A549 (cell line): ENCODE measurements at regions of chr7 and their contacts with region 1.

Region 1: DNA sequence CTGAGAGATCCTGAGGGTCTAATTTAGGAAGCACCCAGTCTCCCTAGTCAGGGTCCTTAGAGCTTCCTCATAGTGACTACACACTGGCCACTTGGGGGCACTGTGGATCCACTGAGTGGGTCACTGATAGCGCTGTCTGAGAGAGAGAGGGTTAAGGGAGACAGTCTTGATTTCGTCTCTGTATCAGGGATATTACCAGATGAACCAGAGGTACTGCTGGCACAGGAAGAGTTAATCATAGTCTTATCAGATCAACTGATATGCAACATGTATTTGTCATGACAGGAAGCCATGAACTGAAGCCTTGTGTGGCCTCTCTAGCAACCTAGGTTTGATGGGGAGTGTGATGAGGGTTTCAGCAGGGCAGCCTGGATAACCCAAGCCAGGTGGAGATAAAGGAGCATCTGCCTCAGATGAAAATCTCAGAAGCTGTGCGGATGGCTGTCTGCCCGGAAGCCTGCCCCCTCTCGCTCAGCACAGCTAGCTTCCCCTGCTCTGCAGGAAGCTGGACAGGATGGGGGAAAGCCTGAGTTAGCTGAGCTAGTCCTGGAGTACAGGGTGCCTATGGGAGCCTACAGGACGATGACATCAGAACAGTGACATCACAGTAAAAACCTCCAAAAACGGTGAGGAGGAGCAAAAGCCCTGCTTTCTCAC is 214.0 kb upstream of the PRSS1 start:
- DNase-seq: peak; percentile 68 to 76
- ATAC-seq: peak; percentile 97 to 100
- H3K4me3 ChIP-seq: no peak overlapping the region
- H3K27ac ChIP-seq: peak overlapping the region in 1 of 2 experiments; percentile 50; a peak in 2 of 6 replicates
- H3K4me1 ChIP-seq: peaks cover 14% of the 10 kb centered on the region; the same call in 2 of the 3 replicates
- CTCF ChIP-seq: peak; percentile 94
- EP300 ChIP-seq: no peak
- POLR2A ChIP-seq: no peak
- RAD21 ChIP-seq: peak; percentile 93 to 99

Region 2: DNA sequence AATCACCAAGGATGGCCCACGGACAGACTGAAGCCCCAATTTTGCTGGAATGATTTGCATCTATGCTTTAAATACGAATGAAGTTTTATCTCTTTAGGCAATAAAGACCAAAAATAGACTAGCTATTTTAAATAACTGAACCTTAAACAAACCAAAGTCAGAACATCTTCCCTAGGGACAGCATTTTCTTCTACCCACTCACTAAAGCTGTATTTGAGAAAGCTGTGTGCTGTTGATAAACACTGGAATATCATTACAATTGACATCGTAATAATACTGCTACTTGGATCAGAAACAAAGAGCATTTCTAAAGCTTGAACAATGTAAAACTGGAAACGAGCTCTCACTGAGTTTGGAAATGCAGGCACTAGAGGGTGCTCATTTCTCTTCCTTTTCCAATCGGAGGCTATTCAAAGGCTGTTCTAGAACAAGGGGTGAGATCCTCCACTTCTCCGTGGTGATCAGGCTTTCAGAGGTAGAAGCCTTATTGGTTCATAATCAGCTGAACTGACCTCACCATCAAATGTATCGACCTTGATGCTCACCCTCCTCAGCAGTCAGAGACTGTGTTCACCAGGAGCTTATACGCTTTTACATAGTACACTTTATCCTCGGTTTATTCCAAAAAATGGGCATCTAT is 11.3 kb before region 1 on chr7:
- CTCF ChIA-PET with region 1: interaction called, 53 read pairs
- POLR2A ChIA-PET with region 1: no interaction called
- DNase-seq: no peak
- ATAC-seq: peak in 1 of 2 experiments; percentile 47; a peak in 2 of 6 replicates
- H3K4me3 ChIP-seq: no peak overlapping the region
- H3K27ac ChIP-seq: no peak overlapping the region
- H3K4me1 ChIP-seq: no peaks in the 10 kb centered on the region
- CTCF ChIP-seq: no peak; the same call in 2 of the 3 replicates
- EP300 ChIP-seq: no peak
- POLR2A ChIP-seq: no peak
- RAD21 ChIP-seq: no peak

Region 3: DNA sequence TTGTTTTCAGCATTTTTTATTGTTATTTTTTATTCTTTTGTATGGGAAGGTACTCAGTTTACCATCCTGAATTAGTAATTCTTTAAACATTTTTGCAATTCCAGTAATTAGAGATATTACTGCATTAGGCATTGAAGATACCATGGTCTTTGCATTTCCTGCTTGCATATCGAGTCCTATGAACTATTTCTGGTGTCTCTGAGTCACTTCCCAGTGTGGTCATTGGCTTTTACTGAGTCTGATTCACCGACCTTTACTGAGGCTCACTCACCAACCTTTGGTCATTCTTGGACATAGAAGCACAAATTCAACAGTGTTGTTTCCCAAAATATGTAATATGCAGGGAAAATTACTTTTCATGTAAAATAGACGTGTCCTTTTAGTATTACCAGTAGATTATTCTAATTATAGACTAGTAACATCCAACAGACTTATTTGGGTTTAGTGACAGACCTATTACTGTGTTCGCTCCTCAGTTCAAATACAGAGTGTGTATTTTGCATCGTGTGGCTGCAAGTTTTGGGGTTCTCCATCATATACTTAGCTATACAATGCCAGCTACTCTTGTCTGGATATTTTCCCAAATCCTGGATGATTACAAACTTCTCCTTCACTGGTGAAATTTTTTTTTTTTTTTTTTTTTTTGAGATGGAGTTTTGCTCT is 33.3 kb after region 1 on chr7:
- CTCF ChIA-PET with region 1: interaction called, 19 read pairs
- POLR2A ChIA-PET with region 1: no interaction called
- DNase-seq: peak; percentile 38 to 72
- ATAC-seq: peak; percentile 94 to 97
- H3K4me3 ChIP-seq: no peak overlapping the region
- H3K27ac ChIP-seq: peak overlapping the region; percentile 2 to 54; a peak in 3 of 6 replicates
- H3K4me1 ChIP-seq: peaks cover 16% of the 10 kb centered on the region
- CTCF ChIP-seq: no peak
- EP300 ChIP-seq: no peak
- POLR2A ChIP-seq: no peak
- RAD21 ChIP-seq: no peak

Region 4: GRCh38 chr7:142603870-142604448 is 68.7 kb after region 1 on chr7:
- CTCF ChIA-PET with region 1: interaction called, 56 read pairs
- POLR2A ChIA-PET with region 1: no interaction called
- DNase-seq: peak; percentile 57 to 66
- ATAC-seq: peak; percentile 43 to 65; a peak in 5 of 6 replicates
- H3K4me3 ChIP-seq: no peak overlapping the region; the same call in 2 of the 3 replicates
- H3K27ac ChIP-seq: no peak overlapping the region
- H3K4me1 ChIP-seq: no peaks in the 10 kb centered on the region
- CTCF ChIP-seq: peak; percentile 86
- EP300 ChIP-seq: no peak
- POLR2A ChIP-seq: no peak
- RAD21 ChIP-seq: peak; percentile 79 to 80

Region 5: DNA sequence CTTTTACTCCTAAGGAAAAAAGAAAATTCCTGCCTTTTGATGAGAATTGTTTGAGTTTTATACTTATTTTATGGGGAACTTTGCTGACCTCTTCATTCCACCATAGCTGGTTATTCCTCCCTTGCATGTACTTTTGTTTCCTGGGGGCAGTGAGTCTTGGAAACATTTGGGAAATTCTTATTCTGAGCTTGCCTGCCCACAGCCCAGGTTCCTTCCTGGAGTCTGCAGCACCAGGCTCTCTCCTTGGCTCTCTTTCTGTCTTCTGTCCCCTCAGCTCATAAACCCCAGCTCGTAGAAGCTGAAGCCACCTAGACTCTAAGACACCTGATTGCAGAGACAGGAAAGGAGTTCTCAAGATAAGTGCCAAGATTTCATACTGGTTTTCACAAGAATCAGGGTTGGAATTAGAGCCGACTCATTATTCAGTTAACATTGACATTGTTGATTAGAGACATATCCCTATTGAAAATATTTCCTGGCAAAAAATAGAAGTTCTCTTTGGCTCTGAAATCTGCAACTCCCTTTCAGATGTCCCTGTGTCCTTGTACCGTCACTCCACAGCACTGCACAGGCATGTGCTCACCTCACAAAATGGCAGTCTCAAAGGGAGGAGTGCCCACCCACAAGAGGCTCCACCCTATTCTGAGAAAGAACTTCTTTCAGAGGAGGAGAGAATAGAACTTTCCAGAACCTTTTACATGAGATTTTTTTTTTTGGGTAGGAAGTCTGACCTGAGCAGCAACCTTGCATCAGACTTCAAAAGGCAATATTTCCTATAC is 146.3 kb after region 1 on chr7:
- CTCF ChIA-PET with region 1: no interaction called
- POLR2A ChIA-PET with region 1: no interaction called
- DNase-seq: no peak
- ATAC-seq: no peak
- H3K4me3 ChIP-seq: no peak overlapping the region
- H3K27ac ChIP-seq: no peak overlapping the region
- H3K4me1 ChIP-seq: no peaks in the 10 kb centered on the region
- CTCF ChIP-seq: no peak
- EP300 ChIP-seq: no peak
- POLR2A ChIP-seq: no peak
- RAD21 ChIP-seq: no peak

Region 6: DNA sequence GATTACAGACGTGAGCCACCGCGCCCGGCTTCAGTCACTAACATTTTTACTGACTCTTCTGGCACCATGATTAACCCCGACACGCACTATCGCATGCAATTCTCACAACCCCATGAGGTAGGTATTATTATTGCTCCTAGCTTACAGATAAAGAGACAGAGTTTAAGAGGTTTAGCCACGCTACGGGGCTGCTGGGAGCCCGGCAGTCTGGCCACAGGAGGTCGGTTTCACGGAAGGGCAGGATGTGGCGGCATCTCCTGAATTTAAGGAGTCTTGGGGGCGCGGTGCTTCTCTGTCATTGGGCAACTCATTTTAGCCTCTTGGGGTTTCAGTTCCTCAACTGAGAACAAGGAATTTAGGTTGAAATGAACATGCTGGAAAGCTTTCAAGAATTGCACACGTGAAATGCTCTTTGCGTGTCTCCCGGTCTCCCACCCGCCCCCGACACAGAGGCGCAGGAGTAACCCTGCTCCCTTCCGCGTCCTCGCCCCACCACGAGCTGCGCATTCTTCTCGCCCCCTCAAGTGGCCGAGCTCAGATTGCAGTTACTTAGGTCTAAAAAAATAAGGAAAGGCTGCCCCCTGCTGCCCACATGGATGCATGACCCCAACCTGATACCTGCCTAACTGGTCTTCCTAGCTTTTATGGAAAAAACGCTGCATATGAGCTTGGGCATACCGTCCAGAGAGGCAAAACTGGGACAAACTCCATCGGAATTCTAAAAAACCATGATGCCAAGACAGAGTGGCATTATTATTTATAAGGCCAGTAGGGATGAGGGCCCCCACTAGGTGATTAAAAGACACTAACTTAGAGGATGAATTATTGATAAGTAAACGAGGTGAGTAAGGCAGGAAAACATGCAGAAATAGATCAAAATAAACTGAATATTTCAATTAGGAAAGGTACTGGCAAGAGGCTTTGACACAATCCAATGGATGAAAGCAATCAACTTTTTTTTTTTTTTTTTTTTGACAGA is 248.0 kb after region 1 on chr7:
- CTCF ChIA-PET with region 1: interaction called, 101 read pairs
- POLR2A ChIA-PET with region 1: interaction called, 3 read pairs
- DNase-seq: peak; percentile 74 to 91
- ATAC-seq: peak; percentile 87 to 95
- H3K4me3 ChIP-seq: peak overlapping the region; percentile 34; the same call in 2 of the 3 replicates
- H3K27ac ChIP-seq: no peak overlapping the region
- H3K4me1 ChIP-seq: 0 out of 3 replicates have a peak, but pooled peaks cover 4% of the 10 kb centered on the region
- CTCF ChIP-seq: peak; percentile 98
- EP300 ChIP-seq: no peak
- POLR2A ChIP-seq: no peak
- RAD21 ChIP-seq: peak; percentile 94 to 96